Thyroid gland (tissue), 4 donors: ENCODE measurements at regions of chr15 and their contacts with region 1.

Region 1: GRCh38 chr15:81265944-81266775 is 57.8 kb downstream of the STARD5 start:
- DNase-seq: peak; percentile 78 to 79
- H3K4me3 ChIP-seq: no peak overlapping the region
- H3K27ac ChIP-seq: no peak overlapping the region
- H3K4me1 ChIP-seq: peaks cover 5 to 9% of the 10 kb centered on the region in 2 donors
- H3K27me3 ChIP-seq: no peaks in the 10 kb centered on the region
- CTCF ChIP-seq: peak; percentile 77 to 92 (median 79)
- POLR2A ChIP-seq: no peak

Region 2: GRCh38 chr15:80970018-80970658 is 296.0 kb before region 1 on chr15:
- intact Hi-C with region 1: loop called (anchors 10 kb)
- DNase-seq: peak; percentile 44 to 71
- H3K4me3 ChIP-seq: no peak overlapping the region
- H3K27ac ChIP-seq: no peak overlapping the region
- H3K4me1 ChIP-seq: peaks cover 22 to 32% of the 10 kb centered on the region in 2 donors
- H3K27me3 ChIP-seq: no peaks in the 10 kb centered on the region
- CTCF ChIP-seq: peak; percentile 43 to 83 (median 77)
- POLR2A ChIP-seq: no peak

Region 3: GRCh38 chr15:81106560-81106959 is 159.6 kb before region 1 on chr15:
- intact Hi-C with region 1: loop called (anchors 5 kb)
- DNase-seq: peak; percentile 49 to 58
- H3K4me3 ChIP-seq: no peak overlapping the region
- H3K27ac ChIP-seq: no peak overlapping the region
- H3K4me1 ChIP-seq: no peaks in the 10 kb centered on the region
- H3K27me3 ChIP-seq: no peaks in the 10 kb centered on the region
- CTCF ChIP-seq: peak; percentile 40 to 87 (median 78)
- POLR2A ChIP-seq: no peak

Region 4: GRCh38 chr15:81152339-81152738 is 113.8 kb before region 1 on chr15:
- intact Hi-C with region 1: loop called (anchors 5 kb)
- DNase-seq: no peak
- H3K4me3 ChIP-seq: no peak overlapping the region
- H3K27ac ChIP-seq: no peak overlapping the region
- H3K4me1 ChIP-seq: peaks cover 0 to 21% of the 10 kb centered on the region in 2 donors
- H3K27me3 ChIP-seq: no peaks in the 10 kb centered on the region
- CTCF ChIP-seq: no peak
- POLR2A ChIP-seq: no peak

Region 5: GRCh38 chr15:81216422-81216821 is 49.7 kb before region 1 on chr15:
- intact Hi-C with region 1: no loop called
- DNase-seq: no peak
- H3K4me3 ChIP-seq: no peak overlapping the region
- H3K27ac ChIP-seq: no peak overlapping the region
- H3K4me1 ChIP-seq: no peaks in the 10 kb centered on the region
- H3K27me3 ChIP-seq: no peaks in the 10 kb centered on the region
- CTCF ChIP-seq: no peak
- POLR2A ChIP-seq: no peak

Region 6: GRCh38 chr15:81516461-81516860 is 250.3 kb after region 1 on chr15:
- intact Hi-C with region 1: no loop called
- DNase-seq: no peak
- H3K4me3 ChIP-seq: no peak overlapping the region
- H3K27ac ChIP-seq: no peak overlapping the region
- H3K4me1 ChIP-seq: no peaks in the 10 kb centered on the region
- H3K27me3 ChIP-seq: no peaks in the 10 kb centered on the region
- CTCF ChIP-seq: no peak
- POLR2A ChIP-seq: no peak